Posterior cingulate gyrus (tissue), 11 donors: ENCODE measurements at regions of chr10 and their contacts with region 1.

Region 1: GRCh38 chr10:119165171-119166110 is at the start of gene SFXN4:
- DNase-seq: peak; percentile 71 to 97 (median 84)

Region 2: DNA sequence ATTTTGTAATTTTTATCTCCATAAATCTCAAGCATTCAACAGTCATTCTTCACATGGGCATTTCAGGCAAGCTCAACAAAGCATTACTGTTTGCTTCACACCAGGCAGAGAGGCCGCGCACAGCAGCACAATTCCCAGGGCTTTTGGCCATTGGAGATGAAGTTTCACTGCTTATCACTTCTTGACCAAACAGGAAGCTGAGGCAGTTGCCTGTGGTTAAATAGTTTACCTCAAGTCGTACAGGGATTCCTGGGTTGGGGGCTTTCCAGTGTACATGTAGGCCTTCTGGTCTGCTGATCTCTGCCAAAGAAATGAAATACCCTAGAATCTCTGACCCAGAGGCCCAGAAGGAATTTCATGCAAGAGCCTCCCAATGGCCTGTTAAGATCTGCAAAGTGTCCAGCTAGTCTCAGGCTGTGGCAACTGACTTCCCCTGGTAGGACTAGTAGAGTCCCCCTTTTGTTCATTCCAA is 24.4 kb after region 1 on chr10:
- intact Hi-C with region 1: no loop called
- DNase-seq: peak in 4 of 10 donors; percentile 25 to 90 (median 43)

Region 3: GRCh38 chr10:119207367-119207668 is 41.9 kb after region 1 on chr10 and contains the start of gene GRK5:
- intact Hi-C with region 1: loop called (anchors 5 kb)
- DNase-seq: peak; percentile 88 to 99 (median 92)